ENCODE measurements at regions of chr12 and their contacts with region 1.

Region 1: GRCh38 chr12:130041983-130042812 is 120.1 kb upstream of the FZD10 start:
- DNase-seq: peak; percentile 7 to 58 (median 39)
- ATAC-seq: peak; percentile 48
- H3K4me3 ChIP-seq: no peak overlapping the region
- H3K4me3 Mint-ChIP-seq: no peak overlapping the region
- H3K27ac ChIP-seq: no peak overlapping the region
- H3K27ac Mint-ChIP-seq: no peak overlapping the region
- H3K4me1 ChIP-seq: no peaks in the 10 kb centered on the region
- H3K4me1 Mint-ChIP-seq: peaks cover 0 to 7% (median 0%) of the 10 kb centered on the region in 7 donors
- H3K27me3 ChIP-seq: peaks cover 0 to 11% of the 10 kb centered on the region in 2 donors
- H3K27me3 Mint-ChIP-seq: peaks cover 25 to 76% (median 63%) of the 10 kb centered on the region in 5 donors

Region 2: DNA sequence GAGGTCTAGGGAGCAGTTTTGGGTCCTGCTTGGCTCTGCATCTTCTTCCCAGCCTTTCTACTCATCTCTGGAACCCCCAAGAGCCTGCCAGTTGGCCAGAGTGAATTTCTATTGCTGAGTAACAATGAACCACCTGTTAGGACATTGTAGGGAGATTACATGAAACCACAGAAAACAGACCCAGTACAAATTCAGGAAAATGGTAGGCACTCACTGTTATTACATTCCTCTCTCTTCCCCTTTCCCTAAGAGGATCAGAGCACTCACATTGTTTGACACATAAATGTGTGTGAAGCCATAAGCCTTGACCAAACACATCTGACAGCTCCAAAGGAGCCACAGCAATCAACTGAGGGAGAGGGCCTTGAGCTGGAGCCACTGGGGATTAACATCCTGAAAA is 354.5 kb before region 1 on chr12:
- CTCF ChIA-PET with region 1: no interaction called
- POLR2A ChIA-PET with region 1: no interaction called
- intact Hi-C with region 1: no loop called
- DNase-seq: no peak
- ATAC-seq: no peak
- H3K4me3 ChIP-seq: no peak overlapping the region
- H3K4me3 Mint-ChIP-seq: no peak overlapping the region
- H3K27ac ChIP-seq: no peak overlapping the region
- H3K27ac Mint-ChIP-seq: no peak overlapping the region
- H3K4me1 ChIP-seq: no peaks in the 10 kb centered on the region
- H3K4me1 Mint-ChIP-seq: no peaks in the 10 kb centered on the region
- H3K27me3 ChIP-seq: no peaks in the 10 kb centered on the region
- H3K27me3 Mint-ChIP-seq: no peaks in the 10 kb centered on the region

Region 3: DNA sequence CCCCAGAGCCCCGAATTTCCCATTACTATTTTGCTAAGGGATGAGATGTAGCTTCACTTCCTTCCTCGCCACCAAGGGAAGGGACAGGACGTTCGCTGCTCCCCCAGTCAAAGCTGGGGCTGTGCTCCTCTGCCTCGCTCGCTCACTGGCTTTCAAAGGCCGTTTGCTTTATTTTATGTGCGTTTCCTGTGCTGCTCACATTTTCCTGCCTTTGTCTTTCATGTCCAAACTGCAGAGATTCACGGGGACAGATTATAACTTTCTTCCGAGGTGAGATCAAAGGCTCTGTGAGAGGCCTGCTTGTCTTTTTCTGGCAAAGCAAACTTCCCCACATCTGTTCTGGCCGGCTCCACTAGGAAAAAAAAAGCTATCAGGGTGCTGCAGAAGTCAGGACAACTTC is 44.0 kb after region 1 on chr12:
- CTCF ChIA-PET with region 1: no interaction called
- POLR2A ChIA-PET with region 1: no interaction called
- intact Hi-C with region 1: loop called in 1 of 2 experiments (anchors 1 kb)
- DNase-seq: peak in 7 of 9 donors; percentile 19 to 58 (median 36)
- ATAC-seq: peak; percentile 30
- H3K4me3 ChIP-seq: peak overlapping the region; percentile 31
- H3K4me3 Mint-ChIP-seq: peak overlapping the region; percentile 29 to 91 (median 86)
- H3K27ac ChIP-seq: peak overlapping the region; percentile 48
- H3K27ac Mint-ChIP-seq: peak overlapping the region in 8 of 9 donors; percentile 80 to 92 (median 88)
- H3K4me1 ChIP-seq: peaks cover 0 to 25% of the 10 kb centered on the region in 2 donors
- H3K4me1 Mint-ChIP-seq: peaks cover 10 to 63% (median 43%) of the 10 kb centered on the region in 7 donors
- H3K27me3 ChIP-seq: no peaks in the 10 kb centered on the region
- H3K27me3 Mint-ChIP-seq: no peaks in the 10 kb centered on the region

Region 4: DNA sequence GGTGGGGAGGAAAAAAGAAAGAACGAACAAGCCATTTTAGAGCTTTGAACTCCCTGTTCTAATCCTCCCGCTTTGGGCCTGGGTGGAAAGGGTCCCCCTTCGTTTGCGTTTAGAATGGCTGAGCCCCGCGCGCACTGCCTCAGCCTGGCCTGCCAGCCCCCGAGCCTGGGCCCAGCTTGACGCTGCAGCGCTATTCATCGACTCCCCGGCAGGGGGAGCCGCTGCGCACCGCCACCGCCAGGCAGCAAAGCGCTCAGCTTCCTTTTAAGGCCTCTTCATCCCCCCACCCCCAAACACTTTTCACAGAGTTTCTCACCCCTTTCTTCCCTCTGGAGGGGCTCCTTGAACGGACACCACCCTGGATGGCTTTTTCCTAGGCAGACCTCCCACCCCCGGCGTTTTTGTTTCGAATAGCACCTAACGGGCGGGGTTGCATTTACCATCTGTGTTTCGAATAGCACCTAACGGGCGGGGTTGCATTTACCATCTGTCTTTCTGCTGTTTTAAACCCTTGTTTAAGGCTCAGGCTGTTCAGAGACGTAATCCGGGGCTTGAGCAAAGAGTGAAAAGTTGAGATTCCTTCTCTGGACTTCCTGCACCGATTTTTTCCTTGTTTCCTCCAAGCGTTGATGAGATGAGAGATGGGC is 239.1 kb after region 1 on chr12:
- CTCF ChIA-PET with region 1: no interaction called
- POLR2A ChIA-PET with region 1: no interaction called
- intact Hi-C with region 1: loop called in 1 of 2 experiments (anchors 1 kb)
- DNase-seq: peak in 8 of 9 donors; percentile 4 to 46 (median 42)
- ATAC-seq: peak; percentile 64
- H3K4me3 ChIP-seq: no peak overlapping the region
- H3K4me3 Mint-ChIP-seq: peak overlapping the region in 4 of 10 donors; percentile 15 to 58 (median 51)
- H3K27ac ChIP-seq: no peak overlapping the region
- H3K27ac Mint-ChIP-seq: no peak overlapping the region
- H3K4me1 ChIP-seq: peaks cover 0 to 4% of the 10 kb centered on the region in 2 donors
- H3K4me1 Mint-ChIP-seq: peaks cover 0 to 13% (median 6%) of the 10 kb centered on the region in 7 donors
- H3K27me3 ChIP-seq: no peaks in the 10 kb centered on the region
- H3K27me3 Mint-ChIP-seq: peaks cover 0 to 34% (median 4%) of the 10 kb centered on the region in 5 donors

Region 5: DNA sequence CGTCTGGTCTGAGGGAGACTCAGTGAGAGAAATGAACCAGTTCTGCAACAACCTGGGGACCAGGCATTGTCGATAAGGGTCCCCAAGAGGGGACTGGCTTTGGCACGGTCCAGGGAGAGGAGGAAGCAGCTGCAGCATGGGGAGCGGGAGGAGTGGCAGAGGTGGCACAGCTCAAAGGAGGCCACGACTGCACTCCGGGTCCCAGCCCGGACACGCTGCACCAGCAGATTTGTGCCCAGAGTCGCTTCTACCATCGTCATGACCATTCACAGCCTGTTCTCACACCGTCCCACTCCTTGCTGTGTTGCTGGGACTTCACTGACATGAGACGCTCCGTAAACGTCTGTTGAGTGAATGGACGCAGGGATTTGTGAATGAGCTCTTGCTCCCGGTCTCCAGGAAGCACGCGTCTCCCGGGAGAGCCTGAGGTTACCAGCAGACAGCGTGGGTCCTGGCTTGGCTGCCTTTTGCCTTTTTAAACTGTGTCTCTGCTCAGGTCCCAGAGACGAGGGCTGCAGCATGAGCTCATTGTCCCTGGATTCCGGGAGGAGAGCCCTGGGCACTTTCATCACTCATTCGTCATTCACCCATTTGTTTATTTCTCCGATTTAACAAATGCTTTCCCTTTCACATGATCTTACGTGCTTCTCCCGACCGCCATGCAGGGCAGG is 432.5 kb after region 1 on chr12:
- CTCF ChIA-PET with region 1: no interaction called
- POLR2A ChIA-PET with region 1: no interaction called
- intact Hi-C with region 1: no loop called
- DNase-seq: no peak
- ATAC-seq: no peak
- H3K4me3 ChIP-seq: no peak overlapping the region
- H3K4me3 Mint-ChIP-seq: no peak overlapping the region
- H3K27ac ChIP-seq: no peak overlapping the region
- H3K27ac Mint-ChIP-seq: no peak overlapping the region
- H3K4me1 ChIP-seq: no peaks in the 10 kb centered on the region
- H3K4me1 Mint-ChIP-seq: no peaks in the 10 kb centered on the region
- H3K27me3 ChIP-seq: no peaks in the 10 kb centered on the region
- H3K27me3 Mint-ChIP-seq: peaks cover 0 to 21% (median 0%) of the 10 kb centered on the region in 5 donors